ENCODE measurements at regions of chr2 and their contacts with region 1.

Region 1: GRCh38 chr2:151828143-151828889 is at the start of gene ARL5A:
- DNase-seq: peak; percentile 98
- H3K4me3 ChIP-seq: peak within 1 kb of the TSS; percentile 74 to 100 (median 99)
- H3K27ac ChIP-seq: peak within 1 kb of the TSS; percentile 89
- H3K4me1 ChIP-seq: peaks cover 33% of the 10 kb centered on the region
- H3K27me3 ChIP-seq: no peaks in the 10 kb centered on the region
- CTCF ChIP-seq: no peak
- POLR2A ChIP-seq: peak; percentile 87
- total RNA-seq, gene ARL5A: 73.2 and 77.5 TPM in 2 replicates

Region 2: GRCh38 chr2:151619337-151619989 is 208.9 kb before region 1 on chr2:
- CTCF ChIA-PET with region 1: no interaction called
- POLR2A ChIA-PET with region 1: no interaction called
- dilution Hi-C with region 1: no loop called
- intact Hi-C with region 1: loop called (anchors 2 kb)
- DNase-seq: peak; percentile 97
- H3K4me3 ChIP-seq: peak overlapping the region in 1 of 3 experiments; percentile 46
- H3K27ac ChIP-seq: peak overlapping the region; percentile 93
- H3K4me1 ChIP-seq: peaks cover 41% of the 10 kb centered on the region
- H3K27me3 ChIP-seq: no peaks in the 10 kb centered on the region
- CTCF ChIP-seq: peak; percentile 54 to 56
- POLR2A ChIP-seq: peak; percentile 60

Region 3: DNA sequence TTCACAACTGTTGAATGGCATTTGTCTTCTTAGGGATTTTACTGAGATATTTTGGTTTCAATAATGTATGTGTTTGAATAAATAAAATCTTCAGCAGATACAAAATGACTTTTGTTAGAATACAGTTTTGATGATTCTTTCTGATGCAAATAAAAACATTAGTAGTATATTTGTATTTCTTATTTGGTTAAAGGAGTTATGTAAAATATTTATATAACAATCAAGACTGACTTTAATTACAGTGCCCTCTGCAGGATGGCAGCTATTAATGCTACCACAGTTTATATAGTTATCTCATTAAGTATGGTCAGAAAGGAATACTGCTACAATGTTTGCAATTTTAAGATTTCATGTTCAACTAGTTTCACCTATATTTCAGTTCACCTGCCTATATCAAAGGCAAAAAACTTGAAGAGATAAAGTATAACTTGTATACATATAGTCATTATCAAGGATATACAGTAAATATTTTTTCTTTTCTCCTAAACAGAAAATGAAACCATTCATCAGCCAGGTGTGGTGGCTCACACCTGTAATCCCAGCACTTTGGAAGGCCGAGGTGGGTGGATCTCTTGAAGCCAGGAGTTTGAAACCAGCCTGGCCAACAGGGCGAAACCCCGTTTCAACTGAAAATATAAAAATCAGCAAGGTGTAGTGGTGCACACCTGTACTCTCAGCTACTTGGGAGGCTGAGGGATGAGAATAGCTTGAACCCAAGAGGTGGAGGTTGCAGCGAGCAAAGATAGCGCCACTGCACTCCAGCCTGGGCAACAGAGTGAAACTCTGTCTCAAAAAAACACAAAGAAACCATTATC is 19.9 kb before region 1 on chr2:
- CTCF ChIA-PET with region 1: interaction called, 27 read pairs
- POLR2A ChIA-PET with region 1: no interaction called
- dilution Hi-C with region 1: no loop called
- intact Hi-C with region 1: no loop called
- DNase-seq: peak; percentile 26
- H3K4me3 ChIP-seq: no peak overlapping the region
- H3K27ac ChIP-seq: no peak overlapping the region
- H3K4me1 ChIP-seq: peaks cover 5% of the 10 kb centered on the region
- H3K27me3 ChIP-seq: no peaks in the 10 kb centered on the region
- CTCF ChIP-seq: peak in 1 of 2 donors; percentile 28
- POLR2A ChIP-seq: no peak

Region 4: DNA sequence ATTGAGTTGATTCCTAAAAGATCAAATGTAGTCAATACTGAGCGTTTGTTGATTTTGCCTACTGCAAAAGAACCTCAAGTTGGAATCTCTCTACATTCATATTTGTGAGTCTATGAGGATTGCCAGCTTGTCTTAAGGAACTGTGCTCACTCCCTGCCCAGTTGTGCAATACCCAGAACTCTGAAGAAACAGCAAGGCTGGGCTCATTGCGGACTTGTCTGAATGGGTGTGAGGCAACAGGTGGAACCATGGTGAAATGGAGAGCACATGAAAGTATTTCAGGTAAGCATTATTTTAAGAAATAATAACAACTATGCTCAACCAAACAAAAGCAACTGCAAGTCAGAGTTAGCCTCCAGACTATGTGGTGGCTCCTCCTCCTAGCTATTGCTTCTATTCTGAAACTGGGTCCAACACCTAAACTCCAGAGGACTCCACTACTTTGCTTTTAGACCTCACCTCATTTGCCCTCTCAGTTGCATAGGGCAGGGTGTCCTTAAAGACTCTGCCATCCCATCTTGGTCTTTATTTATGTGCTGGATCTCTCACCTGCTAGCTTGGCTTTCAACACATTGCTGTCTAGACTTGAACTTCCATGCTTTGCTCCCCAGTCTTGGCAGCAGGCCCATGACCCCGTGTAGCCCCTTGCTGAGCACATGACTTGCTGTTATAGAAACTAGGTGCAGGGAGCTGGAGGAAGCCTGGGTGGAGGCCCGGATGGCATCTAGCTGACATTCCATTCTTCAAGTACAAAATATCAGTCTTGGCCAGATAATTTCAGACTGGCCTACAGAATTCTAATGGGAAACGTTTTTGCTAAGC is 94.7 kb after region 1 on chr2:
- CTCF ChIA-PET with region 1: no interaction called
- POLR2A ChIA-PET with region 1: no interaction called
- dilution Hi-C with region 1: no loop called
- intact Hi-C with region 1: loop called (anchors 1 kb)
- DNase-seq: peak; percentile 99
- H3K4me3 ChIP-seq: no peak overlapping the region
- H3K27ac ChIP-seq: peak overlapping the region; percentile 5
- H3K4me1 ChIP-seq: peaks cover 16% of the 10 kb centered on the region
- H3K27me3 ChIP-seq: peaks cover 5 to 11% of the 10 kb centered on the region in 2 experiments
- CTCF ChIP-seq: no peak
- POLR2A ChIP-seq: no peak

Region 5: DNA sequence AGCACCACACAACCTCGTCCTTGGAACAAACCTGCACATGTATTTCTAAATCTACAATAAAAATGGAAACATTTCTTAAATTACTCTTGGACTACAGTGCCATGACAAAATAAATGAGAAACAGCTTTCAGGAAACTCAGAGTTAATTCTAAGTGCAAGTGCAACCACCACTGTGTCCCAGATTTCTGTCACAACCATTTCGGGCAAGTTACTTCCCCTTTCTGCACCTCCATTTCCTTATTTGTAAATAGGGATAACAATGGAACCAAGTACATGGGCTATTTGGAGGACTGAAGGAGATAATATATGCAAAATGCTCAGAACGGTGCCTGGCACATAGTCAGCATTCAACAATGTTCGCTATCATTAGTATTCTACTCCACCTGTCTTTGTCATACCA is 177.3 kb after region 1 on chr2:
- CTCF ChIA-PET with region 1: no interaction called
- POLR2A ChIA-PET with region 1: no interaction called
- dilution Hi-C with region 1: no loop called
- intact Hi-C with region 1: loop called (anchors 2 kb)
- DNase-seq: no peak
- H3K4me3 ChIP-seq: no peak overlapping the region
- H3K27ac ChIP-seq: no peak overlapping the region
- H3K4me1 ChIP-seq: no peaks in the 10 kb centered on the region
- H3K27me3 ChIP-seq: peaks cover 4% of the 10 kb centered on the region in 2 experiments
- CTCF ChIP-seq: no peak
- POLR2A ChIP-seq: no peak

Region 6: GRCh38 chr2:152189622-152190495 is 361.5 kb after region 1 on chr2:
- CTCF ChIA-PET with region 1: no interaction called
- POLR2A ChIA-PET with region 1: no interaction called
- dilution Hi-C with region 1: no loop called
- intact Hi-C with region 1: no loop called
- DNase-seq: peak; percentile 71
- H3K4me3 ChIP-seq: no peak overlapping the region
- H3K27ac ChIP-seq: no peak overlapping the region
- H3K4me1 ChIP-seq: no peaks in the 10 kb centered on the region
- H3K27me3 ChIP-seq: no peaks in the 10 kb centered on the region
- CTCF ChIP-seq: peak; percentile 58 to 64
- POLR2A ChIP-seq: no peak

Region 7: GRCh38 chr2:152717228-152718075 is 889.1 kb after region 1 on chr2 and contains the start of gene PRPF40A:
- CTCF ChIA-PET with region 1: no interaction called
- POLR2A ChIA-PET with region 1: no interaction called
- dilution Hi-C with region 1: no loop called
- intact Hi-C with region 1: loop called (anchors 5 kb)
- DNase-seq: peak; percentile 99
- H3K4me3 ChIP-seq: peak within 1 kb of the TSS; percentile 72 to 99 (median 87)
- H3K27ac ChIP-seq: peak within 1 kb of the TSS; percentile 85
- H3K4me1 ChIP-seq: peaks cover 17% of the 10 kb centered on the region
- H3K27me3 ChIP-seq: no peaks in the 10 kb centered on the region
- CTCF ChIP-seq: no peak
- POLR2A ChIP-seq: peak; percentile 45
- total RNA-seq, gene PRPF40A: 99.5 and 123 TPM in 2 replicates

Measured in endothelial cell of umbilical vein (primary cell).